ENCODE measurements at regions of chr16 and their contacts with region 1.

Region 1: GRCh38 chr16:68590201-68590994 is 51.3 kb downstream of the ZFP90 start:
- DNase-seq: peak; percentile 69
- H3K4me3 ChIP-seq: no peak overlapping the region
- H3K27ac ChIP-seq: no peak overlapping the region
- H3K4me1 ChIP-seq: no peaks in the 10 kb centered on the region
- H3K27me3 ChIP-seq: no peaks in the 10 kb centered on the region
- CTCF ChIP-seq: peak; percentile 87 to 97

Region 2: GRCh38 chr16:68166264-68166663 is 424.1 kb before region 1 on chr16:
- CTCF ChIA-PET with region 1: no interaction called
- dilution Hi-C with region 1: no loop called
- in situ Hi-C with region 1: no loop called
- intact Hi-C with region 1: no loop called
- DNase-seq: no peak
- H3K4me3 ChIP-seq: no peak overlapping the region
- H3K27ac ChIP-seq: no peak overlapping the region
- H3K4me1 ChIP-seq: no peaks in the 10 kb centered on the region
- H3K27me3 ChIP-seq: no peaks in the 10 kb centered on the region
- CTCF ChIP-seq: no peak

Region 3: DNA sequence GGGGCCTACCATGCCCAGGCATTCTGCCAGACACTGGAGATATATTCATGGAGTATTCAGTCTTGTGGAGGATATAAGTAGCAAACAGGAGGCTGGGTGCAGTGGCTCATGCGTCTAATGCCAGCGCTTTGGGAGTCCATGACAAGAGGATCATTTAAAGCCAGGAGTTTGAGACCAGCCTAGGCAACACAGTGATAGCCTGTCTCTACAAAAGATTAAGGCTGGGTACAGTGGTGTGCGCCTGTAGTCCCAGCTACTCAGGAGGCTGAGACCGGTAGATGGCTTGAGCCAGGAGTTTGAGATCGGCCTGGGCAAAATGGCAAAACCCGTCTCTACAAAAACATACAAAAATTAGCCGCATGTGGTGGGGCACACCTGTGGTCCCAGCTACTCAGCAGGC is 17.0 kb after region 1 on chr16:
- CTCF ChIA-PET with region 1: no interaction called
- dilution Hi-C with region 1: no loop called
- in situ Hi-C with region 1: no loop called
- intact Hi-C with region 1: no loop called
- DNase-seq: no peak
- H3K4me3 ChIP-seq: no peak overlapping the region
- H3K27ac ChIP-seq: no peak overlapping the region
- H3K4me1 ChIP-seq: peaks cover 15% of the 10 kb centered on the region
- H3K27me3 ChIP-seq: no peaks in the 10 kb centered on the region
- CTCF ChIP-seq: no peak

Region 4: GRCh38 chr16:68644715-68645493 is 54.5 kb after region 1 on chr16 and contains the start of gene CDH3:
- CTCF ChIA-PET with region 1: interaction called, 4 read pairs
- dilution Hi-C with region 1: no loop called
- in situ Hi-C with region 1: loop called in 1 of 2 experiments (anchors 5 kb)
- intact Hi-C with region 1: loop called (anchors 2 kb)
- DNase-seq: peak; percentile 97
- H3K4me3 ChIP-seq: peak within 1 kb of the TSS; percentile 82 to 94 (median 89)
- H3K27ac ChIP-seq: peak within 1 kb of the TSS; percentile 87
- H3K4me1 ChIP-seq: peaks cover 59% of the 10 kb centered on the region
- H3K27me3 ChIP-seq: no peaks in the 10 kb centered on the region
- CTCF ChIP-seq: peak in 1 of 2 donors; percentile 31
- total RNA-seq, gene CDH3: 628 to 995 TPM

Region 5: DNA sequence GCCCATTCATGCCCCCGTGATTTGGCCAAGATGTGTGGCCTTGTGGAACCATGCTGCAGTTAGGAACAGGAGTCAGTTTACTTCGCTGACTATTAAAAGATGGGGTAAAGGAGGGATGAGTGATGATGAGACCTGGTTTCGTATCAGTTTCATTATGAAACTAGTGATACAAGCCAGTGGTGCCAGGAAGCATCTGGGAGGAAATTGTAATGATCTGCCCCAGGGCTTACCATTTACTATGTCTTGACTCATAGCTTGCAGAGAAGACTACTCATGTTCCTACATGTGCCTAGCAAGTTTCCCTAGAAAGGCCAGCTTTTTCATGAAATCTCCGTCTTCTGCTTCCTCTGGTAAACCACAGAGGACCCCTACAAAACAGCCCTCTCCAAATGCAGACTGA is 77.9 kb after region 1 on chr16:
- CTCF ChIA-PET with region 1: interaction called, 6 read pairs
- dilution Hi-C with region 1: no loop called
- in situ Hi-C with region 1: loop called in 1 of 2 experiments (anchors 10 kb)
- intact Hi-C with region 1: loop called (anchors 5 kb)
- DNase-seq: peak; percentile 100
- H3K4me3 ChIP-seq: peak overlapping the region in 1 of 3 experiments; percentile 12
- H3K27ac ChIP-seq: peak overlapping the region; percentile 99
- H3K4me1 ChIP-seq: peaks cover 65% of the 10 kb centered on the region
- H3K27me3 ChIP-seq: no peaks in the 10 kb centered on the region
- CTCF ChIP-seq: no peak

Region 6: GRCh38 chr16:68689925-68690324 is 99.5 kb after region 1 on chr16:
- CTCF ChIA-PET with region 1: no interaction called
- dilution Hi-C with region 1: no loop called
- in situ Hi-C with region 1: loop called in 1 of 2 experiments (anchors 5 kb)
- intact Hi-C with region 1: no loop called
- DNase-seq: no peak
- H3K4me3 ChIP-seq: no peak overlapping the region
- H3K27ac ChIP-seq: no peak overlapping the region
- H3K4me1 ChIP-seq: no peaks in the 10 kb centered on the region
- H3K27me3 ChIP-seq: no peaks in the 10 kb centered on the region
- CTCF ChIP-seq: peak in 1 of 2 donors; percentile 4

Region 7: GRCh38 chr16:68737046-68737729 is 146.8 kb after region 1 on chr16 and contains the start of gene CDH1:
- CTCF ChIA-PET with region 1: no interaction called
- dilution Hi-C with region 1: no loop called
- in situ Hi-C with region 1: no loop called
- intact Hi-C with region 1: loop called (anchors 2 kb)
- DNase-seq: peak; percentile 89
- H3K4me3 ChIP-seq: peak within 1 kb of the TSS; percentile 88 to 97 (median 93)
- H3K27ac ChIP-seq: peak within 1 kb of the TSS; percentile 97
- H3K4me1 ChIP-seq: peaks cover 38% of the 10 kb centered on the region
- H3K27me3 ChIP-seq: no peaks in the 10 kb centered on the region
- CTCF ChIP-seq: no peak
- total RNA-seq, gene CDH1: 355 to 369 TPM